ENCODE measurements at regions of chrX and their contacts with region 1.

Region 1: DNA sequence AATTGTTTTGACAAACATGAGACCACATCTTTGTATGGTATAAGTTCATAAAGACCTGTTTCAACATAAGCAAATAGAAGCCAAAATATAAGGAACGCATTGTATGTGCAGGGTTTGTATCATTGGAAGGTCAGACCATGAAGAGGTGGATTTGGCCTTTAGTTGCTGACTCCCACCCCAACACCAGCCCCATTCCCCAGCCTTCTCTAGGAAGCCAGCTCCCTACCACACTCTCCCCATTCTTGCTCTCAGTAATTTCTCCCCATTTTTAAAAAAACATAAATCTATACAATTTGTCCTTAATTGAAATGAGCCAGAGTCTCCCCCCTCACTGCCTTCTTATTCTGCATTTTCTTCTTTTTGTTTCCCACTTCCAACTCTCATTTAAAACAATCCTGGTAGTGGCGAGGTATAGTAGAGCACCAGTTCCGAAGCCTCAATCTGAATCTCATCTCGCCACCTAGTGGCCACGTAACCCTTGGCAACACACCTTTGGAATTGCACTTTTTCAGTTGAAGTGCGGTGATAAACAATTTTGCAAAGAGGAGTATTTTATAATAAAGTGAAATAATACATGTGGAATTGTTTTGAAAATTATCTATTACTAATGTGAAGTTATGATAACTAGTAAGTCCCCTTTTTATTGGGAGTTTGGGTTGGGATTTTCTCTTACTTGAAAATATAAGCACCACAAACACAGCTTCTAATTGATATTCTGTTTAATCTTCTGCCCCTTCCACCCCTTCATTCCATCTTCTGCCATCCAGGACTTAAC is 126.6 kb downstream of the ASB9 start:
- DNase-seq: peak; percentile 34
- H3K4me3 ChIP-seq: no peak overlapping the region
- H3K27ac ChIP-seq: no peak overlapping the region
- H3K4me1 ChIP-seq: no peaks in the 10 kb centered on the region
- H3K27me3 ChIP-seq: no peaks in the 10 kb centered on the region
- CTCF ChIP-seq: peak; percentile 90 to 93

Region 2: DNA sequence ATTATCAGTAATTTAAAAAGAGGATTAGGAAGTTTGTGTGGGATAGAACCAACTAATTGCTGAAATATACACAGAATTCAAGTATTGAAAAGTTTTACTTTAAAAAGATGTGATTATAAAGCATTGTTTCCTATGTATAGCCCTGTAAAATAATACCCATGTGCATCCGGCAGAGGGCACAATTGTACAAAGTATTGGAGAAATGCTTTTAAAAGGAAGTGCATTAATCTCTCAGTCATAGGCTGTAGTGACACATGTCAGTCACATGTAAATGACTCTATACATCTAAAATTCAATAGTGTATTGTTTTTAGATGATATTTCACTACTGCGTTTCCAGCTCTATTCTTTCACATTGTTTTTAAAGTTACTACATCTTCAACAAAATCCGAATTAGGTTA is 1103.9 kb before region 1 on chrX:
- CTCF ChIA-PET with region 1: no interaction called
- dilution Hi-C with region 1: no loop called
- in situ Hi-C with region 1: loop called in 1 of 2 experiments (anchors 10 kb)
- intact Hi-C with region 1: loop called (anchors 1 kb)
- DNase-seq: peak; percentile 25
- H3K4me3 ChIP-seq: no peak overlapping the region
- H3K27ac ChIP-seq: no peak overlapping the region
- H3K4me1 ChIP-seq: peaks cover 4% of the 10 kb centered on the region
- H3K27me3 ChIP-seq: no peaks in the 10 kb centered on the region
- CTCF ChIP-seq: peak; percentile 71 to 72

Region 3: DNA sequence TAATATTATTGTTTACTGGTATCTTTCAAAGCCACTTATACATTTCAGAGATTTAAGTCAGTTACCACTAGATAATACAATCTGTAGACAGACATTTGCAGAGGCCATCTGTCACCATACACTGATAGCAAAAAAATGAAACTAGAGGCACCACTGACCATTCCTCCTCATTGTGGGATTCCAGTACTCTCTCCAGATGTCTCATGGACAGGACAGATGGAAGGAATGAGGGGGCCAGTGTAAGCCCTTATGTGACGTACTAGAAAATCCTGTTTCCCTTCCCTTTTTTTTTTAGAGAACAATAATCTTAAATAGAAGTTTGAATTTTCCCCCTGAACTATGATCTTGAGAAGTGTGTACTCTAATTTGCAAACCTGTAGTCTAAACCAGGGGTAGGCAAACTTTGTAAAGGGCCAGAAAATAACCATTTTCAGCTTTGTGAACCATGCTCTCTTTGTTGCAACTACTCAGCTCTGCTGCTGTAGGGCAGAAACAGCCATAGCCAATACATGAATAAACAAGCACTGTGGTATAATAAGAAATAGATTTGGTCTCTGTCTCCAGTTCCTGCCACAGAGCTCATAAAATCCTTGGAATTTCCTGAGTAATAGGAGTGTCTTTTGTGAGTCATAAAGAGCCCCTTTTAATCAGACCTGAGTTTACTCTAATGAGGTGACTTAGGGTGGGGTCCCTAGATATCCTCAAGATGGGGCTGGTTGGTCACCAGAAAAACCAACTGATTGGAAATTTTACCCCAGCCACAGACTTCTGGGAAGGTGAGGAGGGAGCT is 179.6 kb before region 1 on chrX:
- CTCF ChIA-PET with region 1: no interaction called
- dilution Hi-C with region 1: no loop called
- in situ Hi-C with region 1: no loop called
- intact Hi-C with region 1: loop called (anchors 10 kb)
- DNase-seq: peak; percentile 90
- H3K4me3 ChIP-seq: peak overlapping the region in 1 of 3 experiments; percentile 31
- H3K27ac ChIP-seq: peak overlapping the region; percentile 93
- H3K4me1 ChIP-seq: peaks cover 22% of the 10 kb centered on the region
- H3K27me3 ChIP-seq: no peaks in the 10 kb centered on the region
- CTCF ChIP-seq: no peak

Region 4: DNA sequence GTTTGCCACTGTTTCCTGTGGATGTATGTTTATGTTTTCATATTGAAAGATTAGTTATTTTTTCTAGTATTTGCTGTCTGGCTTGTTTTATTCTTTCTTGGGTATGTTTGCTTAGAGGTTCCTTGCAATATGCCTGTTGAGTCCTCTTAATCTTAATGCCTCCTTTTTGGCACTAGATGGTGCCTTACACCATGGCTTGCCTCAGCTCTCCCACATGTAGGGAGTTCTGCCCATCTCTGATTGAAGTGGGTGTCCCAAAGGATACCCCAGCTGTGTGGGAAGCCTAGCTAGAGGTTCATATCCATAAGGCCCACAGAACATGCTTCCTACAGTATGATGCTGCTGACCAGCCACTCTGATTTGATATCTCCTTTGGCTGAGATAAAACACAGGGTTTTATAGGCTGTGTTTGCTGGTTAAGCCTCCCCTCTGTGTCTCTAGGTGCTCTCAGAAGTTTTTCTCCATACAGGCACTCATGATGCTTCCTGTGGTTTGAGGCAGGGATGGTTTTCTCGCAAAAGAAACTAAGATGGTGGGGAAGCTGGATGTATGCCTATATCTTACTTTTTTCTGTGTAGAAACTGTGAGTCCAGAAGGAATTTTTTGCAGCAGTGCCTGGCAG is 35.8 kb before region 1 on chrX:
- CTCF ChIA-PET with region 1: no interaction called
- dilution Hi-C with region 1: no loop called
- in situ Hi-C with region 1: no loop called
- intact Hi-C with region 1: loop called (anchors 1 kb)
- DNase-seq: no peak
- H3K4me3 ChIP-seq: no peak overlapping the region
- H3K27ac ChIP-seq: no peak overlapping the region
- H3K4me1 ChIP-seq: no peaks in the 10 kb centered on the region
- H3K27me3 ChIP-seq: no peaks in the 10 kb centered on the region
- CTCF ChIP-seq: peak; percentile 7 to 50

Region 5: DNA sequence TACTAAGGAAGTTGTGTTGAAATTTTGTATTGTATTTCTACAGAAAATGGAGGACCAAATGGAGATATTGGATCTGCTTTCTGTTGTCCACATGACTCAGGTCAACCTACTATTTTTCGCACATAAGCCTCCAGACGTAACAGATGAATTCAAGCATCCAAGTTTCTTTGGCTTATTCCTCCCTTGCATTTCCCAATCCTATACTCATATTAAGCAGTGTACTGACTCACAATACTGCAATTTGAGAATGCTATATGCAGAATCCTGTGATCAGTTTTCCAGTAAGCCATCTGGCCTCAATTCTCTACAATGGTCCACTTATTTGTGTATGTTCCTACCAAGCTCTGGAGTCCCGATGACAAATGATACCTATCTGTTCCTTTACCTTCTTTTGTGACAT is 50.9 kb after region 1 on chrX:
- CTCF ChIA-PET with region 1: no interaction called
- dilution Hi-C with region 1: no loop called
- in situ Hi-C with region 1: no loop called
- intact Hi-C with region 1: no loop called
- DNase-seq: no peak
- H3K4me3 ChIP-seq: no peak overlapping the region
- H3K27ac ChIP-seq: no peak overlapping the region
- H3K4me1 ChIP-seq: no peaks in the 10 kb centered on the region
- H3K27me3 ChIP-seq: peaks cover 9% of the 10 kb centered on the region
- CTCF ChIP-seq: no peak

Measured in mammary epithelial cell (primary cell).